ENCODE measurements at regions of chr1 and their contacts with region 1.

Region 1: GRCh38 chr1:19405761-19406487 is 79.4 kb downstream of the CAPZB start:
- DNase-seq: no peak
- H3K4me3 ChIP-seq: no peak overlapping the region
- H3K27ac ChIP-seq: peak overlapping the region in 1 of 2 donors; percentile 21
- H3K4me1 ChIP-seq: peaks cover 40% of the 10 kb centered on the region
- H3K27me3 ChIP-seq: no peaks in the 10 kb centered on the region
- CTCF ChIP-seq: no peak
- EP300 ChIP-seq: no peak
- POLR2A ChIP-seq: no peak

Region 2: DNA sequence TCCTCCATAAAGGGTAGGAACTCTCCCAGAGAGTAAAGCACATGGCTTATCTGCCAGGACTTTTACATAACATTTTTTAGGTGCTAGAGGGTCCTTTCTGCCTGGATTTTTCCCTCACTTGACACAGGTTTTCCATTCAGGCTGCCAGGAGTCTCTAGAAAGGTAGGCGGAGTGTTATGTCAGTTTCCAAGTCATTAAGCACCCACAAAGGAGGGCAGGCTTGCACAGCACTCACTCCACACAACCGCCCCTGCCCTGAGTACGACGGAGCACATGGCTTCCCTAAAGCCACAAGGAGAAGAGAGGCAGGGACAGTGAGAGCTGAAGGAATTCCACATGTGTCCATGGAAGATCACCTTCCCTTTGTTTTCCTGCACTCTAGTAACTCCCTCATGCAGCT is 23.7 kb after region 1 on chr1:
- intact Hi-C with region 1: no loop called
- DNase-seq: no peak
- H3K4me3 ChIP-seq: no peak overlapping the region
- H3K27ac ChIP-seq: peak overlapping the region; percentile 37 to 85
- H3K4me1 ChIP-seq: peaks cover 55% of the 10 kb centered on the region
- H3K27me3 ChIP-seq: no peaks in the 10 kb centered on the region
- CTCF ChIP-seq: no peak
- EP300 ChIP-seq: no peak
- POLR2A ChIP-seq: no peak

Region 3: DNA sequence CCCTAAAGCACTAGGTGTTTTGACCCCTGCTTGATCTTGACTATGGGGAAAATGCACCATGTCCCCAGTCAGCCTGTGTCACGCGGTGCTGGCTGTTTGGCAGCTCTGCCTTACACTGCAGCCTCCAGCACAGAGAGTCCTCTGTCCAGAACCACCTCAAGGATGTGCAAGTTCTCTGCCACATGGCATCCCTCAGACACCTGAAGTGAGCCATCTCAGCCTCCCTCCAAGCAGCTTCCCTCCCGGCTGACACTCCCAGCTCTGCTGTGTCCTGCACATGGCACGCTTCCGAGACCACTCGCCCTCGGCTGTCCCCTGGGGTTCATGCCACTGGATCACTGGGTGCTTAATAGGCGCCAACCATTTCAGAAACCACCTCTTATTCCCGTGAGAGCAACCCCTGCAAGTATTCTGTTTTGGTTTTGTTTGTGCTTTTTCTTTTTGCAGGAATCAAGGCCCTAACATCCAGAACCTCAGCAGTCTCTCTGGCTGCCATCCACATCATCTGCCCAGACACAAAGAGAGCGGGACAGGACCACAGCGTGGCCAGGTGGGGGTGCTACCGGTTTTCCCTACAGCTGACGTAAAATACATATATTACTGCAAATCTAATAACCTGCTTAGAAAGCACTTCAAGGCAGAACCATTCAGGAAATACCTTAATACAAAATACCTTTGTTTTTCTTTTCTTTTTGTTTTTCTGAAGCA is 33.7 kb after region 1 on chr1:
- intact Hi-C with region 1: loop called in 1 of 4 experiments (anchors 1 kb)
- DNase-seq: peak in 4 of 5 donors; percentile 61 to 75 (median 71)
- H3K4me3 ChIP-seq: no peak overlapping the region
- H3K27ac ChIP-seq: peak overlapping the region; percentile 82 to 95
- H3K4me1 ChIP-seq: peaks cover 52% of the 10 kb centered on the region
- H3K27me3 ChIP-seq: no peaks in the 10 kb centered on the region
- CTCF ChIP-seq: peak in 1 of 3 donors; percentile 24
- EP300 ChIP-seq: no peak
- POLR2A ChIP-seq: no peak